ENCODE measurements at regions of chr2 and their contacts with region 1.

Region 1: DNA sequence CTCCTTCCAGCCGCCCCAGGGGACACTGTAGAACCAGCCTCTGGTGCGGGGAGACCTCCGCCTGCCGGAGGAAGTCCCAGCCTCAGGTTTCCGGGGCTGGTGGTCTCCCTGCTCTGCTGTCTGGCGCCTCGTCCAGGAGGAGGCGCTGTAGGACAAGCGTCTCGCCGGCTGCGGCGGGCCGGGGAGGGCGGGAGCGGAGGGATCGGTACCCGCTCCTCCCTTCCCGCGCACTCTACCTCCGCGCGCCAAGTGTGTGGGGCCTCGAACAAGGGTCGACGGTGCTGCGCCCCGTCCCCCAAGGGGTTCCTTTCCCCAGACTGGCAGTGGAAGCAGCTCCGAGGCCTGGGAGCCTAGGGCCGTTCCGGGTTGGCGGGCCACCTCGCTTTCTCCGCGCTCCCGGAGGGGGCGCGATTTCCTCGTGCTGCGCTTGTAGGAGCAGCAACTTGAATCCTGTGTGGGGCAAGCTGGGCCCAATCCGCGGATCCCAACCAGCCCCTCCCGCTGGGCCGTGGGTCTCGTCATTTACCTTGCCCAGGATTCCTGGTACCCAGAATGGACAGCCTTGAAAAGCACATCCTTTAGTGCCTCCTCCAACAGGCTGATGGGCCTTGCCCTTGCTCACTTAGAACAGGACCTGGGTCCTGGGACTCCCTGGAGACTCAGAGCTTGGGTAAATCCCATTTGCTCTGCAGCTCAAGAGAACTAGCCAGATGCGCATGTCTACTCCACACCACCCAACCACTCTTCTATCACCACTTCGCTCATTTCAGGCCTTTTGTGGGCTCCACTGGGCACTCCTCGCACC is 10.6 kb upstream of the HOXD4 start:
- DNase-seq: peak; percentile 94
- H3K4me3 ChIP-seq: peak overlapping the region; percentile 85
- H3K27ac ChIP-seq: peak overlapping the region; percentile 61
- H3K4me1 ChIP-seq: peaks cover 34% of the 10 kb centered on the region
- H3K27me3 ChIP-seq: no peaks in the 10 kb centered on the region
- CTCF ChIP-seq: peak; percentile 94

Region 2: DNA sequence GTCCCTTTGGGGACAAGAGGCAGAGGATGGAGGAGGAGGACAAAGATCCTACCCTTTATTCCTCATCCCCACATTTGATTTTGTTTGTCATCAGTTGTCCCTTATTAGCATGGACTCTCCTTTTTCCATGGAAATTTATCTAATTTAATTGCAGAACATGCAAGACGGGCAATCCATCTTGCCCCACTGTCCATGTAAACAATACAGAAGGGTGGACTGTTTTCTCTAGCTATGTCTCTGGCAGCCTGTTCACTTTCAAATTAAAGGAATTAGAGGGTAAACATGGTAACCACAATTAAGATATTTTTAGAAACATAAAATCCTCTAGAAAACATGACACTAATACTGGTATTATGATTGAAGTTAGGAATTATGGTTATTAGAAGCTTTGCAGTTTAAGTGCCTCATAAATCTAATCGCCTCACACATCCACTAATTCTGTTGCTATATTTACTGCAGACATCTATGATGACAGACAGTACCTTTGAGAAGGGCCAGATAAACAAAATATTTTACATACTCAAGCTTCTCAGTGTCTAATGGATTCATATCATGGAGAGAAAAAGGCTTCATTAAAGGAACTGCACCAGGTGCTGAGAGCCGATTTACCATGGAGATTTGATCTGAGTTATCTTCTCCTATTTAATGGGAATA is 354.1 kb before region 1 on chr2:
- CTCF ChIA-PET with region 1: no interaction called
- POLR2A ChIA-PET with region 1: no interaction called
- intact Hi-C with region 1: no loop called
- DNase-seq: no peak
- H3K4me3 ChIP-seq: no peak overlapping the region
- H3K27ac ChIP-seq: no peak overlapping the region
- H3K4me1 ChIP-seq: no peaks in the 10 kb centered on the region
- H3K27me3 ChIP-seq: no peaks in the 10 kb centered on the region
- CTCF ChIP-seq: no peak

Region 3: DNA sequence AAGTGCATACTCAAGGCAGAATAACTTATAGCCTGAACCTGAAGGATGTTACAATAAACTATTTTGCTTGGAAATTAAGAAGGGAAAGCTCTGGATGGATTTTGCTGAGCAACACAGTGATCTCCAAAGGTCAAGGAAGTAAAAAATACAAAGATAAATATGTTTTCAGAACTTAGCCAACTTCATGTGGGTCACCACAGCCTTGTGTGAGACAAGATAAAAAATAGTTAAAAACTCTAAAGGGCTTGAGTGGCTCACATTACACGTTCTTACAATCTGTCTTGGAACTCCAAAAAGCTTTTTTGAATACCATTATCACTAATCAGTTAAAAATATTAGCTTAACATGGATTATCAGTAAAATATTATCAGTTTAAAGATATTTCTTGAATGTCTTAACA is 99.6 kb after region 1 on chr2:
- CTCF ChIA-PET with region 1: interaction called, 12 read pairs
- POLR2A ChIA-PET with region 1: no interaction called
- intact Hi-C with region 1: no loop called
- DNase-seq: no peak
- H3K4me3 ChIP-seq: no peak overlapping the region
- H3K27ac ChIP-seq: no peak overlapping the region
- H3K4me1 ChIP-seq: no peaks in the 10 kb centered on the region
- H3K27me3 ChIP-seq: no peaks in the 10 kb centered on the region
- CTCF ChIP-seq: no peak

Region 4: GRCh38 chr2:176280867-176281658 is 140.3 kb after region 1 on chr2:
- CTCF ChIA-PET with region 1: no interaction called
- POLR2A ChIA-PET with region 1: no interaction called
- intact Hi-C with region 1: no loop called
- DNase-seq: no peak
- H3K4me3 ChIP-seq: no peak overlapping the region
- H3K27ac ChIP-seq: no peak overlapping the region
- H3K4me1 ChIP-seq: peaks cover 6% of the 10 kb centered on the region
- H3K27me3 ChIP-seq: no peaks in the 10 kb centered on the region
- CTCF ChIP-seq: no peak

Region 5: DNA sequence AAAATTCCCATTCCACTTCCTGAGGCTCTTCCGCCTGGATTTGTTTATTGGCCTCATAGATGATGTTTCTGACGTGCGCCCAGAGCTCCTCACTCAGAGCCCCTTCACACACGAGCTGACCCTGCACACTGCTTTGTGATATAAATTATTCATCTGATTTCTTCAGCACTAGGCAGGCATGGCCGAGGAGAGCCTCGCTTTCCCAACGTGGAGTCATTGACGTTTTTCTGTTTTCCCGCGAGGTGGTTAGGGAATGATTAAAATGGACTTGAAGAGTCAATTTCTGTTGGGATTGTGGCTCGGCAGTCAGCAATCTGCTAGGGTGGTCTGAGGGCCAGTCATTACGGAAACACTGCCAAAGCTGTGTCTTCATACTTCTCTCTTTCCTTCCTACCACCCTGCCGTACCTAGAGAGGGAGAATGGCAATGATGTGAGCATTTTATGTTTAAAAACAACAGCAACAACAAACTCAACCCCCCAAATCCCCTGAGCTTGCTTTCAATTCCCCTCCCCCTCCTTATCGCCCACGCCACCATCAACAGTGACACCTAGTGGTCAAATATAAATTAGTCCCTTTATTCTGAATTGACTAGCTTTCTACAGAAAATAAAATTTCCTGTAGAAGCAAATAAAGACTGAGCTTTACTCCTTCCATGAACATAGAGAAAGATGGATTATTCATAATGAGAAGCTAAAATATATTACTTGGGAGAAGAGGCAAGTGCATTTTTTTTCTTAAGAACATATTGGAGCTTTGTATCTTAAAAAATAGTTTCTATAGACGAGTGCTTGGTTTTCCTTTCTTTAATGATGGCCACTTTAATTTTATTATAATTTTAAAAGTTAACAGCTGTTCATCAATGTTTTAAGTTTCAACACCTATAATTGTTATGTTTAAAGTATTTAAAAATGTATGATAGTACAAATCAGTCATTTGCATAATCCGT is 413.7 kb after region 1 on chr2:
- CTCF ChIA-PET with region 1: interaction called, 19 read pairs
- POLR2A ChIA-PET with region 1: interaction called, 5 read pairs
- intact Hi-C with region 1: loop called (anchors 2 kb)
- DNase-seq: peak; percentile 86
- H3K4me3 ChIP-seq: peak overlapping the region; percentile 53
- H3K27ac ChIP-seq: peak overlapping the region; percentile 80
- H3K4me1 ChIP-seq: peaks cover 19% of the 10 kb centered on the region
- H3K27me3 ChIP-seq: no peaks in the 10 kb centered on the region
- CTCF ChIP-seq: peak; percentile 82